Heart left ventricle (tissue), 16 donors: ENCODE measurements at regions of chr7 and their contacts with region 1.

Region 1: DNA sequence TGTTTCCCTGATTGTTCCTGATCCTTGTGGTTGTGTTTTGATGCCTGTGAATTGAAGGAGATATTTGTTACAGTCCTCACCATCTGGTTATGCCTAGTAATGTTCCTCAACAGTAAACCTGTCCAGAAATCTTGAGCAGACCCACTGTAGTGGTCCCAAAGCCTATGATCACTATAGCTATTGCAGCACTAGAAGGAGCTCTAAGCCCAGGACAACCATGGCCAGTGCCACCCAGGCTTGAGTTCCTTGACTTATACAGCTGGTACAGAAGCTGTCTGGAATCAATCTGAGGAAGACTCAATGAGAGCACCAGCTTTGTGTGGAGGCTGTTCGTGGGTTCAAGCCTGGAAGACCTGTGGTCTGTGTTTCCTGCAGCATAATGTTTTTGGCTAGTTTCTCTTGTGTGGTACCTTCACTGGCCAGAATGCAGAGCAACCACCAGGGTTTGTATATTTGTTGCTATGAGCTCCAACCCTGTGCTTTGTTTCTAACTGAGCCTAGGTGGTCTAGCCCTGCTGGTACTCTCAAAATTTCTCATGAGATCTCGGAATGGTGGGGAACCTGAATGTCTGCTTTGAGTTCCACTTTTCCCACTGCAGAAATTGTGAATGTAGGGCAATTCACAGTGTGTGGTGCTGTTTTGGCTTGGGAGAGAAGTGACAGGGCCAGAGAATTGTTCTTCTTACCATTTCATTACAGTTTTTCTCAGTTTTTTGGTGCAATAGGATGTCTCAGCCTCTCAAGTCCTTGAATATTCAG is 355.2 kb downstream of the SUGCT start:
- DNase-seq: no peak
- ATAC-seq: no peak
- H3K4me3 ChIP-seq: no peak overlapping the region
- H3K27ac ChIP-seq: no peak overlapping the region
- H3K4me1 ChIP-seq: no peaks in the 10 kb centered on the region
- H3K27me3 ChIP-seq: no peaks in the 10 kb centered on the region
- CTCF ChIP-seq: no peak
- POLR2A ChIP-seq: no peak

Region 2: DNA sequence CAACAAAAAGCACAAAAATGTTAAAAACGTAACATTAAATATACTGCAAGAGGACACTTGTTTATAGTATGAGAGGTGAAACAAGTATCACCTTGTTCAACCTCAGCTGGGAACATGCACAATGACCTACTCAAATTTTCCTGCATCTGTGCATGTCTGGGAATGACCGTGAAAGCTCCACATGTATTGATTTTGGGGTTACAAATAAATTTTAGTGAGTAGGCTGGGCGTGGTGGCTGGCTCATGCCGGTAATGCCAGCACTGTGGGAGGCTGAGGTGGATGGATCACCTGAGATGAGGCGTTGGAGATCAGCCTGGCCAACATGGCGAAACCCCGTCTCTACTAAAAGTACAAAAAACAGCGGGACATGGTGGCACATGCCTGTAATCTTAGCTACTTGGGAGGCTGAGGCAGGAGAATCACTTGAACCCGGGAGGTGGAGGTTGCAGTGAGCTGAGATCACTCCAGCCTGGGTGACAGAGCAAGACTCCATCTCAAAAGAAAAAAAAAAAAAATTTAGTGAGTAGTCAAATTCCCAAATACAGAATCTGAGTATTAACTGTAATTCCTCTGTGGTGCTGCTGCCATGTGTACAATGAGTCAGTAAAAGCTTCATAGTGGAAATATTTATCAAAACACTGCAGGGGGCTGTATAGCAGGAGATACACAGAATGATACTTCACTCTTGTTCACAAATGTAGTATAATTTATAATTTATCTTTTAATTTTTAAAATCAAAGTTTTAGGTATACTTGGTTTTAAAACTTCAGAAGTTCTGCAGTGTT is 314.1 kb before region 1 on chr7:
- intact Hi-C with region 1: loop called in 1 of 10 experiments (anchors 5 kb)
- DNase-seq: no peak
- ATAC-seq: no peak
- H3K4me3 ChIP-seq: no peak overlapping the region
- H3K27ac ChIP-seq: no peak overlapping the region
- H3K4me1 ChIP-seq: no peaks in the 10 kb centered on the region
- H3K27me3 ChIP-seq: no peaks in the 10 kb centered on the region
- CTCF ChIP-seq: no peak
- POLR2A ChIP-seq: no peak

Region 3: GRCh38 chr7:40551685-40552576 is 61.9 kb after region 1 on chr7:
- intact Hi-C with region 1: loop called in 1 of 10 experiments (anchors 2 kb)
- DNase-seq: peak in 2 of 5 donors; percentile 21 to 51
- ATAC-seq: peak in 3 of 4 donors; percentile 39 to 75 (median 50)
- H3K4me3 ChIP-seq: no peak overlapping the region
- H3K27ac ChIP-seq: peak overlapping the region in 1 of 12 donors; percentile 49
- H3K4me1 ChIP-seq: peaks cover 0 to 17% (median 0%) of the 10 kb centered on the region in 12 donors
- H3K27me3 ChIP-seq: no peaks in the 10 kb centered on the region
- CTCF ChIP-seq: no peak
- POLR2A ChIP-seq: no peak